Activated naive CD4-positive, alpha-beta T cell treated with anti-CD3 and anti-CD28 coated beads, Interleukin-2, amount 10 ng/mL, durations not matched to agents 7 days and 5 days (primary cell): ENCODE measurements at regions of chr5 and their contacts with region 1.

Region 1: DNA sequence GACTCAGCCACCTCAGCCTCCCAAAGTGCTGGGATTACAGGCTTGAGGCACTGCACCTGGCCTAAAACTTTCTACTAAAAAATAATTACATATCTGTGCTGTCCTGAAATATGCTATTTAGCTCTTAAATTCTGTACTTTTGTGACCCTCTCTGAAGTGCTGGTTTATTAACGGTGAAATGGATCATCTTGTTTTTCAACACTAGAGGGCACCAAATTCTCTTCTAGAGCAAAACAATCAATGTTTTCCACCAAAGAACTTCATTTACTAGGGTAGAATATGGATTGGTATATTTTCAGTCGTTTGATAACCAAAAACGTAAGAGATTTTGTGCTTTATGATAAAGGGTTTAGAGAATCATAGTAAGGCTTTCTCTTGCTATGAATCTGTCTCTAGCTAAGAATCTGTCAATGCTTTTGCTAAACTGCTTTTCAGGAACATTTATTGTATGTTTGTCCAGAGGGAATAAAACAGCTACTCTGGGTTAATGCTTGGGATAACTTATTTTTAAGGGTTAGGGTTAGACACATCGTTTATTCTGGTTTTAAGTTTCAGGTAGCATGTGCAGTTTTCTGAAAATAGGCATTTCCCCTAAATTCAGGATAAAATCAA is 63.6 kb downstream of the RNF180 start:
- DNase-seq: no peak
- H3K4me3 Mint-ChIP-seq: no peak overlapping the region
- H3K27ac Mint-ChIP-seq: no peak overlapping the region
- H3K4me1 Mint-ChIP-seq: no peaks in the 10 kb centered on the region
- H3K27me3 Mint-ChIP-seq: no peaks in the 10 kb centered on the region

Region 2: DNA sequence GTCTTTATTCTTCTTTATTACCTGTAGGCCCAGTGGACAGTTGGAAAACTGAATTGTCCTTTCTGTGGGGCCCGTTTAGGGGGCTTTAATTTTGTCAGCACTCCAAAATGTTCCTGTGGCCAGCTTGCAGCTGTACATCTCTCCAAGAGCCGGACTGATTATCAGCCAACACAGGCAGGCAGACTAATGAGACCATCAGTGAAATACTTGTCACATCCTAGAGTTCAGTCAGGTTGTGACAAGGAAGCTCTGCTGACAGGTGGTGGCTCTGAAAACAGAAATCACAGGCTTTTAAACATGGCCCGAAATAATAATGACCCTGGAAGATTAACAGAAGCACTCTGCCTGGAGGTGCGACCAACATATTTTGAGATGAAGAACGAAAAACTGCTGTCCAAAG is 15.7 kb before region 1 on chr5:
- CTCF ChIA-PET with region 1: interaction called, 13 read pairs
- DNase-seq: no peak
- H3K4me3 Mint-ChIP-seq: no peak overlapping the region
- H3K27ac Mint-ChIP-seq: no peak overlapping the region
- H3K4me1 Mint-ChIP-seq: no peaks in the 10 kb centered on the region
- H3K27me3 Mint-ChIP-seq: no peaks in the 10 kb centered on the region

Region 3: GRCh38 chr5:64273276-64273675 is 44.0 kb after region 1 on chr5:
- CTCF ChIA-PET with region 1: no interaction called
- DNase-seq: no peak
- H3K4me3 Mint-ChIP-seq: no peak overlapping the region
- H3K27ac Mint-ChIP-seq: no peak overlapping the region
- H3K4me1 Mint-ChIP-seq: no peaks in the 10 kb centered on the region
- H3K27me3 Mint-ChIP-seq: no peaks in the 10 kb centered on the region

Region 4: GRCh38 chr5:64612344-64612961 is 383.2 kb after region 1 on chr5:
- CTCF ChIA-PET with region 1: interaction called, 11 read pairs
- DNase-seq: no peak
- H3K4me3 Mint-ChIP-seq: no peak overlapping the region
- H3K27ac Mint-ChIP-seq: no peak overlapping the region
- H3K4me1 Mint-ChIP-seq: no peaks in the 10 kb centered on the region
- H3K27me3 Mint-ChIP-seq: peaks cover 12% of the 10 kb centered on the region